ENCODE measurements at regions of chr14 and their contacts with region 1.

Region 1: GRCh38 chr14:49620182-49621113 is at the starts of genes MGAT2 and RPL36AL:
- DNase-seq: peak; percentile 95
- ATAC-seq: peak; percentile 91
- H3K4me3 Mint-ChIP-seq: peak within 1 kb of the TSS; percentile 90
- H3K27ac Mint-ChIP-seq: peak within 1 kb of the TSS; percentile 98
- H3K4me1 Mint-ChIP-seq: peaks cover 44% of the 10 kb centered on the region
- H3K27me3 Mint-ChIP-seq: no peaks in the 10 kb centered on the region
- CTCF ChIP-seq: no peak
- total RNA-seq, gene MGAT2: 30.2 to 32.7 TPM
- total RNA-seq, gene RPL36AL: 214 to 231 TPM

Region 2: GRCh38 chr14:49420201-49420600 is 200.2 kb before region 1 on chr14:
- CTCF ChIA-PET with region 1: no interaction called
- POLR2A ChIA-PET with region 1: no interaction called
- intact Hi-C with region 1: no loop called
- DNase-seq: peak; percentile 5
- ATAC-seq: peak; percentile 39
- H3K4me3 Mint-ChIP-seq: no peak overlapping the region
- H3K27ac Mint-ChIP-seq: no peak overlapping the region
- H3K4me1 Mint-ChIP-seq: peaks cover 3% of the 10 kb centered on the region
- H3K27me3 Mint-ChIP-seq: peaks cover 19% of the 10 kb centered on the region
- CTCF ChIP-seq: no peak

Region 3: DNA sequence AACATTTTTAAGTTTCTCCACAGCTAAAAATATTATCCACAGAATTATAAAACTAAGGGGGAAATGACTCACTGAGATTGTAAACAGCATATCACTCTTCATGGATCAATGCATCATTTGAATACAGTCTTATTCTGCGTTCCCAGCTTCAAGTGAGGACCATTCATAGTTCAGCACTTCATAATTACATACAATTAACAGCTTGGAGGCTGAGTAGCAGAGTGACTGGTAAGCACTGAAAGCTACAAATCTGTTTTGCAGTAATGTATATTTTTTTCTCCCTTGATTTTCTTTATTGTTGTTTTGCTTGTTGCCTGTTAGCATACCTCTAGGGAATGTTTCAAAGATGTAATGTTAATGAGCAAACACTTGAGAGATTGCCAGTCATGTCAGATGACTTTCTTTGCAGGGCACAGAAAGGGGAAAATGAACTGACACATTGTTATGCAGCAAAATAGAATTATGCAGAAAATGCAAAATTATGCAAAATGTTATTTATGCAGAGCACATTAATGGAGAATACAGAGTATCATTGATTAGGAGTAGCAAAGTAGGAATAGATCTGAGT is 172.8 kb before region 1 on chr14:
- CTCF ChIA-PET with region 1: no interaction called
- POLR2A ChIA-PET with region 1: no interaction called
- intact Hi-C with region 1: no loop called
- DNase-seq: no peak
- ATAC-seq: no peak
- H3K4me3 Mint-ChIP-seq: no peak overlapping the region
- H3K27ac Mint-ChIP-seq: no peak overlapping the region
- H3K4me1 Mint-ChIP-seq: no peaks in the 10 kb centered on the region
- H3K27me3 Mint-ChIP-seq: peaks cover 6% of the 10 kb centered on the region
- CTCF ChIP-seq: no peak

Region 4: GRCh38 chr14:49585803-49586672 is 34.4 kb before region 1 on chr14 and contains the start of gene RPS29:
- CTCF ChIA-PET with region 1: interaction called, 25 read pairs
- POLR2A ChIA-PET with region 1: interaction called, 60 read pairs
- intact Hi-C with region 1: no loop called
- DNase-seq: peak; percentile 99
- ATAC-seq: peak; percentile 82
- H3K4me3 Mint-ChIP-seq: peak within 1 kb of the TSS; percentile 91
- H3K27ac Mint-ChIP-seq: peak within 1 kb of the TSS; percentile 96
- H3K4me1 Mint-ChIP-seq: peaks cover 41% of the 10 kb centered on the region
- H3K27me3 Mint-ChIP-seq: peaks cover 2% of the 10 kb centered on the region
- CTCF ChIP-seq: no peak
- total RNA-seq, gene RPS29: 2,041 to 2,284 TPM

Region 5: DNA sequence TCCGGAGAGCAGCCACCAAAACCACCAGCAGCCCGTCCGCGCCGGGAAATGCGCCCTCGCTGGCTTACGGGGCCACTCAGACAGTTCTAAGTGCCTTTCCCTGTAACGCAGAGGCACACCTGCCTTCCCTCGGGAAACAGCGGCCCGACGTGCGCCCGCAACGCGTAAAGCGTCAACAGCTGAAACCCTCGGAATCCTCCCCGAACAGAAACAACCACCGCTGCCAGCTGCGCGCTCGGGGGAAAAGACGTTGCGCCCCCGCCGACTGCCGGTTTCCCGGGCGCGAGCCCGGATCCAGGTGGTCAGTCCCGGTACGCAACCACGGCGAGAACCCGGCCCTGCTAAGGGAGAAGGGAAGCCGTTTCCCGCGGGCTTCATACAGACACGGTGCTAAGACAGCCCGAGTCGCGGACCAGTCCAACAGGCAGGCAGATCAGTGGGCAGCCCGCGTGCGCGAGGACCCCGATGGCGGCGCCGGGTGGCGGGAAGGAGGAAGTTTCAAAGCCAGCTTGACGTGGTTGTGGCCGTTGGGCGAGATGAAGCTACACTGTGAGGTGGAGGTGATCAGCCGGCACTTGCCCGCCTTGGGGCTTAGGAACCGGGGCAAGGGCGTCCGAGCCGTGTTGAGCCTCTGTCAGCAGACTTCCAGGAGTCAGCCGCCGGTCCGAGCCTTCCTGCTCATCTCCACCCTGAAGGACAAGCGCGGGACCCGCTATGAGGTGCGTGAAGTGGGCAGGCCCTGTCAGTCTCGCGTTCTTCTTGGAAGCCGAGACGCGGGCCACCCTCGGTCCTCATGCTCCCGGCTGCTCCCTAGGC is 21.8 kb before region 1 on chr14 and contains the start of gene LRR1:
- CTCF ChIA-PET with region 1: interaction called, 5 read pairs
- POLR2A ChIA-PET with region 1: interaction called, 47 read pairs
- intact Hi-C with region 1: loop called (anchors 1 kb)
- DNase-seq: peak; percentile 89
- ATAC-seq: peak; percentile 86
- H3K4me3 Mint-ChIP-seq: peak within 1 kb of the TSS; percentile 98
- H3K27ac Mint-ChIP-seq: peak within 1 kb of the TSS; percentile 98
- H3K4me1 Mint-ChIP-seq: peaks cover 18% of the 10 kb centered on the region
- H3K27me3 Mint-ChIP-seq: no peaks in the 10 kb centered on the region
- CTCF ChIP-seq: no peak
- total RNA-seq, gene LRR1: 44.3 to 46.4 TPM

Region 6: DNA sequence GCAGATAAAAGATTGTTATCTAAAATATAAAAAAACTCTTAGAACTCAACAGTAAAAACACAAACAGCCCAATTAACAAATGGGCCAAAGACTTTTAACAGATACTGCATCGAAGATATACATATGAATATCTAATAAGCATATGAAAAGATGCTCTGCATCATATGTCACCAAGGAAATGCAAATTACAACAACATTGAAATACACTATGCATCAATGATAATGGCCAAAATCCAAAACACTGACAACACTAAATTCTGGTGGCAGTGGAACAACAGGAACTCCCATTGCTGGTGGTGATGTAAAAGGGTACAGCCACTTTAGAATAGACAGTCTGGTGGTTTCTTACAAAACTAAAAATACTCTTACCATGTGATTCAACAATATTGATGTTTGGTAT is 188.3 kb after region 1 on chr14:
- CTCF ChIA-PET with region 1: no interaction called
- POLR2A ChIA-PET with region 1: no interaction called
- intact Hi-C with region 1: no loop called
- DNase-seq: no peak
- ATAC-seq: no peak
- H3K4me3 Mint-ChIP-seq: no peak overlapping the region
- H3K27ac Mint-ChIP-seq: peak overlapping the region; percentile 11
- H3K4me1 Mint-ChIP-seq: peaks cover 8% of the 10 kb centered on the region
- H3K27me3 Mint-ChIP-seq: no peaks in the 10 kb centered on the region
- CTCF ChIP-seq: no peak

Region 7: DNA sequence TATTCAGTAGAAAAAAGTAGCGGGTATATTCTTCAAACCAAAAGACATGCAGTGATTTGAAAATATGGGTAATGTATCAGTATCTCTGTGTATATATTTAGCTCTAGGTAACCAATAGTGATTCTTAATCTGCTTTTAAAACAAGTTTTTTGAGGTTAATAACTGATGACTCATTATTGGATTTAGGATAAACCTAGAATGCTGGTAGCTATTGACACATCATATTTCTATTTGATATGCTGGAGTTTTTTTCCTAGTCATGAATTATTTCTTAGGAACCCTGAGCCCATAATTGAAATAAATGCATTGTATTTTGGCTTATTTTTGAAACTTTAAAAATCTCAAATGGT is 288.0 kb after region 1 on chr14:
- CTCF ChIA-PET with region 1: no interaction called
- POLR2A ChIA-PET with region 1: no interaction called
- intact Hi-C with region 1: no loop called
- DNase-seq: no peak
- ATAC-seq: no peak
- H3K4me3 Mint-ChIP-seq: no peak overlapping the region
- H3K27ac Mint-ChIP-seq: peak overlapping the region; percentile 88
- H3K4me1 Mint-ChIP-seq: peaks cover 43% of the 10 kb centered on the region
- H3K27me3 Mint-ChIP-seq: no peaks in the 10 kb centered on the region
- CTCF ChIP-seq: no peak

Region 8: DNA sequence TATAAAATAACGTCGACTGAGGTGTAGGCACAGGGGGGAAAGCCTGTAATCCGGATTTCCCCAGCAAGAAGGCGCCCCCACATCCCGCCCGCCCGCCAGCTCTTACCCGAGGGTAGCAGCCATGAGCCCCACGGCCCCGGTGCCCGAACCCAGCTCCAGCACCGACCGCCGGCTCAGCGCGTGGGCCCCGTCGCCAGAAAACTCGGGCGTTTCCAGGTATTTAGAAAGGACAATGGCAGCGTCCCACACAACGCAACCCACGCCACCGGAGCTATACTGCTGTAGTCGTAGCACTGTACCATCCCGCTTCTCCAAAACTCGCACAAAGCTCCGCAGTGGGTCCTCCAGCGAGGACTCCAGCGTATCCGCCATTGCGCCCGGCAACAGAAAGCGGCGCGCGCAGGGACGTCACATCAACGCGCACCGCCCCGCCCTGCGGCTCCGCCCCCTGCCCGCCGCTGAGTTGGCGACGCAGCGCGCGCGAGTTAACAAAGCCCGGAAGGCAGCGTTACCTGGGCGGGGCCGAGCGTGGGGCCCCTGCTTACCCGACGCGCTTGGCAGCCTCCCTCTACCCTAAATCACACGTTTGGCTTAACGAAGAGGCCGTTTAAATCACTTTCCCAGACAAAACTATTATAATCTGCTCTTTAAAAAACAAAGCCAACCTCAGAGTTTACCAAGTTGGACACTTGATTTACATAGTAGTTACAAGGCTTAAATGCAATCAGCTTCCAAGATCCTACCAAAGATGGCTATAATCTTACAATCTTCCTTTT is 495.9 kb after region 1 on chr14 and contains the start of gene VCPKMT:
- CTCF ChIA-PET with region 1: interaction called, 3 read pairs
- POLR2A ChIA-PET with region 1: no interaction called
- intact Hi-C with region 1: loop called (anchors 10 kb)
- DNase-seq: peak; percentile 97
- ATAC-seq: peak; percentile 100
- H3K4me3 Mint-ChIP-seq: peak within 1 kb of the TSS; percentile 94
- H3K27ac Mint-ChIP-seq: peak within 1 kb of the TSS; percentile 98
- H3K4me1 Mint-ChIP-seq: peaks cover 32% of the 10 kb centered on the region
- H3K27me3 Mint-ChIP-seq: no peaks in the 10 kb centered on the region
- CTCF ChIP-seq: no peak
- total RNA-seq, gene VCPKMT: 11.4 to 11.6 TPM